ENCODE measurements at regions of chr5 and their contacts with region 1.

Region 1: GRCh38 chr5:1167728-1168709 is 33.4 kb upstream of the SLC6A19 start:
- DNase-seq: peak; percentile 71 to 81 (median 75)
- ATAC-seq: peak; percentile 91
- H3K4me3 ChIP-seq: no peak overlapping the region
- H3K27ac ChIP-seq: no peak overlapping the region
- H3K4me1 ChIP-seq: peaks cover 2 to 34% of the 10 kb centered on the region in 2 experiments; a peak in 3 of 5 replicates
- H3K27me3 ChIP-seq: peaks cover 10 to 51% of the 10 kb centered on the region in 2 experiments
- CTCF ChIP-seq: peak; percentile 82 to 94 (median 90)
- EP300 ChIP-seq: no peak
- POLR2A ChIP-seq: no peak
- RAD21 ChIP-seq: peak; percentile 93 to 98

Region 2: GRCh38 chr5:923281-923873 is 244.6 kb before region 1 on chr5:
- CTCF ChIA-PET with region 1: interaction called, 15 read pairs
- POLR2A ChIA-PET with region 1: no interaction called
- in situ Hi-C with region 1: no loop called
- intact Hi-C with region 1: loop called (anchors 1 kb)
- DNase-seq: peak; percentile 83 to 90 (median 88)
- ATAC-seq: peak; percentile 100
- H3K4me3 ChIP-seq: no peak overlapping the region
- H3K27ac ChIP-seq: no peak overlapping the region
- H3K4me1 ChIP-seq: peaks cover 7 to 20% of the 10 kb centered on the region in 2 experiments; a peak in 3 of 5 replicates
- H3K27me3 ChIP-seq: no peaks in the 10 kb centered on the region
- CTCF ChIP-seq: peak; percentile 95 to 96 (median 96)
- EP300 ChIP-seq: no peak
- POLR2A ChIP-seq: no peak
- RAD21 ChIP-seq: peak; percentile 97 to 99

Region 3: DNA sequence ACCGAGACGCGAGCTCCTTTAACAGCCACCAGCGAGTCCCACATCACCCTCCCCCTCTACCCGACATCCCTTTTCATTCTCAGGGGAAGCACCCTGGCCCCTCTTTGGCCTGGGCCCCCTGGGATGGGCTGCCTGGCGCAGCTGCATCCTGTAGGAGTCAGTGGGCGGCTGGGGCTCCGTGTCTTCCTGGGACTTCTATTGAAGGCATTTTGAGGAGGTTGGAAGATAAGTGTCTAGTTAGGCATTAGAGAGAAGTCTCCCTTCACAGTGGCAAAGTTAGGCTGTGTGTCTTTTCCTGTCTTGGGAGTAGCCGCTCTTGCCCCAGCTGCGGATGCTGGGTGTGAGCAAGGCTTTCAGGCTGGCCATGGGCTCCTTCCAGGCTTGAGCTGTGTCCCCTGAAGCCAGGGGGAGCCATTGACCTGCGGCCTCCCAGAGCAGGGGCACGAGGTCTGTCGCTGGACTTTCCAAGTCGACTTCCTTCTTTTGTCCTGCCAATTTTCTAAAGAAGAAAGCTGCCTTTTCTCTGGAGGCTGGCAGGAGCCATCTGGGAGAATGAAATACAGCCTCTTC is 178.0 kb before region 1 on chr5:
- CTCF ChIA-PET with region 1: interaction called, 25 read pairs
- POLR2A ChIA-PET with region 1: no interaction called
- in situ Hi-C with region 1: no loop called
- intact Hi-C with region 1: loop called (anchors 10 kb)
- DNase-seq: peak in 2 of 4 experiments; percentile 50 to 65
- ATAC-seq: peak; percentile 85
- H3K4me3 ChIP-seq: no peak overlapping the region
- H3K27ac ChIP-seq: no peak overlapping the region
- H3K4me1 ChIP-seq: no peaks in the 10 kb centered on the region; a peak in 1 of 5 replicates
- H3K27me3 ChIP-seq: peaks cover 7 to 43% of the 10 kb centered on the region in 2 experiments; a peak in 3 of 5 replicates
- CTCF ChIP-seq: peak; percentile 66 to 79 (median 66)
- EP300 ChIP-seq: no peak
- POLR2A ChIP-seq: no peak
- RAD21 ChIP-seq: peak; percentile 87 to 89

Region 4: GRCh38 chr5:1204693-1205242 is 36.7 kb after region 1 on chr5:
- CTCF ChIA-PET with region 1: interaction called, 25 read pairs
- POLR2A ChIA-PET with region 1: no interaction called
- in situ Hi-C with region 1: loop called (anchors 5 kb)
- intact Hi-C with region 1: loop called (anchors 1 kb)
- DNase-seq: peak; percentile 57 to 73 (median 64)
- ATAC-seq: peak; percentile 59
- H3K4me3 ChIP-seq: no peak overlapping the region
- H3K27ac ChIP-seq: no peak overlapping the region
- H3K4me1 ChIP-seq: peaks cover 25 to 81% of the 10 kb centered on the region in 2 experiments
- H3K27me3 ChIP-seq: peaks cover 0 to 38% of the 10 kb centered on the region in 2 experiments; a peak in 4 of 5 replicates
- CTCF ChIP-seq: peak; percentile 77 to 91 (median 83)
- EP300 ChIP-seq: no peak; the same call in 1 of the 2 replicates
- POLR2A ChIP-seq: no peak
- RAD21 ChIP-seq: peak; percentile 75 to 87

Region 5: DNA sequence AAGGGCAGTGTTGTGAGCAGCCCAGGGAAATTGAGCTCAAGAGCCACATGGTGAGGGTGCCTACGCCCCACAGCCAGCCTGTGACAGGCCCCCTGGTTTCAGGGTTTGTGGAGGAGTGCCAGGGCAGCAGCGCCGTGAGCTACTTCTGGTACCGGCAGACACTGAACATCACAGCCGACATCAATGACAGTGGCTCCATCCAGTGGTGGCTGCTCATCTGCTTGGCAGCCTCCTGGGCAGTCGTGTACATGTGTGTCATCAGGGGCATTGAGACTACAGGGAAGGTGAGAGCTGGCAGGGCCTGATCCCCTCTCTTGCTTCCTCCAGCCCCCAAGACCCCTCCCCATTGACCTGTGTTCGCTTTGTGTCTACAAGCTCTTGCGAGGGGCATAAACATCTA is 67.4 kb after region 1 on chr5:
- CTCF ChIA-PET with region 1: interaction called, 16 read pairs
- POLR2A ChIA-PET with region 1: interaction called, 3 read pairs
- in situ Hi-C with region 1: no loop called
- intact Hi-C with region 1: loop called (anchors 1 kb)
- DNase-seq: peak; percentile 33 to 53 (median 41)
- ATAC-seq: peak; percentile 79
- H3K4me3 ChIP-seq: no peak overlapping the region
- H3K27ac ChIP-seq: no peak overlapping the region
- H3K4me1 ChIP-seq: peaks cover 8 to 33% of the 10 kb centered on the region in 2 experiments; a peak in 4 of 5 replicates
- H3K27me3 ChIP-seq: peaks cover 24 to 64% of the 10 kb centered on the region in 2 experiments; a peak in 4 of 5 replicates
- CTCF ChIP-seq: peak; percentile 55 to 66 (median 62); a peak in 5 of 6 replicates
- EP300 ChIP-seq: no peak
- POLR2A ChIP-seq: no peak
- RAD21 ChIP-seq: peak; percentile 54 to 75

Region 6: DNA sequence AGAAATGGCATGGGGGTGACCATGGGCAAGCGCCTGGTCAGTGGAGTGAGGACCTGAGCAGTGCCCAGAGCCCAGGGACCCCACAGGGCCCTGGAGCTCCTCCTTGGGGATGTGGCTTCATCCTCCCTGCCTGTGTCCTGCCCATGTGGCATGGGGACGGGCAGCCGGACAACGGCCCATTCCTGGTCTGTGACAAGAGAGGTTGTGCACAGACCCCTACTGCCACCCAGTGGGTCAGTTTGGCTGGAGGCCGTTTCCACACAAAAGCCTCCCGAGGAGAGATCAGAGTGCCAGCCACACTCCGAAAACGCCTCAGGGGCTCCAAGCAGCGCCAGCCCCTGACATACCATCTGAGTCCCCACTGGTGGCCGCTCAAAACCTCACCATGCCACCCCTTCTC is 77.0 kb after region 1 on chr5:
- CTCF ChIA-PET with region 1: interaction called, 3 read pairs
- POLR2A ChIA-PET with region 1: interaction called, 3 read pairs
- in situ Hi-C with region 1: no loop called
- intact Hi-C with region 1: loop called (anchors 2 kb)
- DNase-seq: peak; percentile 35 to 59 (median 46)
- ATAC-seq: peak; percentile 40; the same call in 2 of the 3 replicates
- H3K4me3 ChIP-seq: no peak overlapping the region
- H3K27ac ChIP-seq: no peak overlapping the region
- H3K4me1 ChIP-seq: peaks cover 0 to 40% of the 10 kb centered on the region in 2 experiments; a peak in 2 of 5 replicates
- H3K27me3 ChIP-seq: peaks cover 32 to 91% of the 10 kb centered on the region in 2 experiments
- CTCF ChIP-seq: peak; percentile 39 to 56 (median 55); a peak in 5 of 6 replicates
- EP300 ChIP-seq: no peak
- POLR2A ChIP-seq: no peak
- RAD21 ChIP-seq: peak; percentile 38 to 60; a peak in 3 of 4 replicates

Region 7: GRCh38 chr5:1356873-1357787 is 189.1 kb after region 1 on chr5:
- CTCF ChIA-PET with region 1: no interaction called
- POLR2A ChIA-PET with region 1: no interaction called
- in situ Hi-C with region 1: no loop called
- intact Hi-C with region 1: no loop called
- DNase-seq: no peak
- ATAC-seq: peak; percentile 26
- H3K4me3 ChIP-seq: no peak overlapping the region
- H3K27ac ChIP-seq: no peak overlapping the region
- H3K4me1 ChIP-seq: peaks cover 0 to 15% of the 10 kb centered on the region in 2 experiments; a peak in 1 of 5 replicates
- H3K27me3 ChIP-seq: peaks cover 79 to 83% of the 10 kb centered on the region in 2 experiments
- CTCF ChIP-seq: no peak
- EP300 ChIP-seq: no peak
- POLR2A ChIP-seq: no peak
- RAD21 ChIP-seq: no peak

Region 8: DNA sequence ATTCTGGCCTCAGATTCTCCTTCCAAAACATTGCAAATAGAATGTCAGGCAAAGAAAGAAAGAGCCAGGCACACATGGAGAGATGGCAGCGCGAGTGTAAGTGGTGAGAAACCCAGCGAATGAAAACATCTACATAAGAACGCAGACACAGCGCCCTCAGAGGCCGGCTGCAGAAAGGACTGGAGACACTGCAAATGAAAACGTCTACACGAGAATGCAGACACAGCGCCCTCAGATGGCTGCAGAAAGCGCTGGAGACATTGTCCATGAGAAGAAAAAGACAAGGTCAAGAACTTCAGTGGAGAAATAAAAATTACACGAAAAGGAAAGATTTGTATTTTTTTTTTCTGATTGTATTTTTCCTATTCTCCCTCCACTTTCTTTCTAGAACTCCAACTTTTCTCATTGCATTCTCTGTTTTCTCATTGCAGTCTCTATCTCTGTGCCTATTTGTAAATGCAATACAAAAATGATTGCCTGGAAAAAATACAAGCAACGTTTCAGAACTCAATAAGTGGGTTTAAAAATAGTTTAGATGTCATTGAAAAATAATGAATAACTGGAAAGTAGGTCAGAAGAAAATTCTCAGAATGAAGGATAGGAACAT is 473.6 kb after region 1 on chr5:
- CTCF ChIA-PET with region 1: interaction called, 10 read pairs
- POLR2A ChIA-PET with region 1: no interaction called
- in situ Hi-C with region 1: loop called (anchors 5 kb)
- intact Hi-C with region 1: loop called (anchors 1 kb)
- DNase-seq: peak; percentile 81 to 94 (median 86)
- ATAC-seq: peak; percentile 91
- H3K4me3 ChIP-seq: no peak overlapping the region
- H3K27ac ChIP-seq: no peak overlapping the region
- H3K4me1 ChIP-seq: peaks cover 0 to 41% of the 10 kb centered on the region in 2 experiments; a peak in 2 of 5 replicates
- H3K27me3 ChIP-seq: peaks cover 31 to 71% of the 10 kb centered on the region in 2 experiments
- CTCF ChIP-seq: peak; percentile 99 to 100 (median 100)
- EP300 ChIP-seq: 0 out of 2 replicates have a peak, but pooled peaks have one; percentile 20
- POLR2A ChIP-seq: no peak
- RAD21 ChIP-seq: peak; percentile 88 to 96

Measured in K562 (cell line).